Right ventricle myocardium superior (tissue), 1 donor: ENCODE measurements at regions of chr9 and their contacts with region 1.

Region 1: GRCh38 chr9:136122425-136123383 is 4.0 kb upstream of the TMEM250 start:
- DNase-seq: peak; percentile 91
- ATAC-seq: peak; percentile 46

Region 2: GRCh38 chr9:135797507-135798262 is 325.0 kb before region 1 on chr9:
- intact Hi-C with region 1: loop called (anchors 10 kb)
- DNase-seq: peak; percentile 68
- ATAC-seq: peak; percentile 91

Region 3: DNA sequence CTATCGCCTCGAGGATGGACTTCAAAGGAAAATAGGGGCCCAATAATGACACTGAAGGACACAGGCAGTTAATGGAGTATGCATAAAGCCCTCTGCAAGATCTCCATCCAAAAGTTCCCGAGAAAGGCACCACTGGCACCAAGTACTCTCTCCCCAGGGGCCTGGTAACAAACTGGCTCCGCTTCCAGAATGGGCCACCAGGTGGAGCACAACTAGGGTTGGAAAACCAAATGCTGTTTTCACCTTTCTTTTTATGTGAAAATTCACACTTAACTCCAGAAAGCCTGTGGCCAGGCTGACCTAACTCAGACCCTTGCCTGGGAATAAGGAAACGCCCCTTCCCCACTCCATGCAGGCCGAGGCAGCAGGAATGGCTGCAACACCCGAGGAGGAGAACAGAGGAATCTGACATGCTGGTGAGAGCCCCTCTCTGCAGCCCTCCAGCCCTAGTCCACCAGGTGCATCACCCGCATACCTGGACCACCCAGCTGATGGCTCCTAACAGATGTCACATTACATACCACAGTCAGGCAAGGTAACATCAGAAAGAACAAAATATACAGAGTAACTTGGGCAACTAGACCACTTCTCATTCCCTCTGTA is 258.2 kb before region 1 on chr9:
- intact Hi-C with region 1: loop called (anchors 5 kb)
- DNase-seq: peak; percentile 78
- ATAC-seq: peak; percentile 43

Region 4: DNA sequence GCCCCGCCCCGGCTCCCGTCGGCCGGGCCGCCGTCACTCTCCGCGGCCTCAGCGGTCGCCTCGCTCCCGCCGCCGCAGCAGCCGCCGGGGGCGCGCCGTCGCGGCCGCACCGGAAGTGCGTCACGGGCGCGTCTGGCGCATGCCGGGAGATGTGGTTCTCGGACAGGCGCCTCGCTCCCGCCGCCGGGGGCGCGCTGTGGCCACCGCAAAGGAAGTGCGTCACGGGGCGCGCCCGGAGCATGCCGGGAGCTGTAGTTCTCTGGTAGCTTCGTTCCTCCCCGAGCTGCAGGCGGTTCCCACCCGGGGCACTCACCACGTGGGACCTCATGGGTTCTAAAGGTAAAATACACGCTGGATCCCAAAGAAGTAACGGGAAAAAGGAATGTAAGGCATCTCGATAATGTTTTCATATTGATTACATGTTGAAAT is 161.4 kb before region 1 on chr9 and contains the start of gene UBAC1:
- intact Hi-C with region 1: loop called (anchors 2 kb)
- DNase-seq: peak; percentile 99
- ATAC-seq: peak; percentile 91
- total RNA-seq, gene UBAC1: 107 TPM

Region 5: GRCh38 chr9:136089697-136090045 is 33.0 kb before region 1 on chr9:
- intact Hi-C with region 1: loop called (anchors 5 kb)
- DNase-seq: no peak
- ATAC-seq: no peak